Activated B cell treated with CpG ODN at 0.5 μM for 24 hours (primary cell): ENCODE measurements at regions of chr17 and their contacts with region 1.

Region 1: GRCh38 chr17:3845621-3846441 is at the start of gene NCBP3:
- DNase-seq: peak; percentile 92
- ATAC-seq: peak; percentile 96
- H3K4me3 Mint-ChIP-seq: peak within 1 kb of the TSS; percentile 92
- H3K27ac Mint-ChIP-seq: peak within 1 kb of the TSS; percentile 83
- H3K4me1 Mint-ChIP-seq: peaks cover 21% of the 10 kb centered on the region
- H3K27me3 Mint-ChIP-seq: peaks cover 2% of the 10 kb centered on the region
- CTCF ChIP-seq: no peak
- total RNA-seq, gene NCBP3: 49.5 TPM in 2 replicates

Region 2: GRCh38 chr17:2380226-2380922 is 1465.5 kb before region 1 on chr17:
- CTCF ChIA-PET with region 1: no interaction called
- POLR2A ChIA-PET with region 1: no interaction called
- intact Hi-C with region 1: no loop called
- DNase-seq: no peak
- ATAC-seq: no peak
- H3K4me3 Mint-ChIP-seq: no peak overlapping the region
- H3K27ac Mint-ChIP-seq: no peak overlapping the region
- H3K4me1 Mint-ChIP-seq: no peaks in the 10 kb centered on the region
- H3K27me3 Mint-ChIP-seq: no peaks in the 10 kb centered on the region
- CTCF ChIP-seq: no peak

Region 3: DNA sequence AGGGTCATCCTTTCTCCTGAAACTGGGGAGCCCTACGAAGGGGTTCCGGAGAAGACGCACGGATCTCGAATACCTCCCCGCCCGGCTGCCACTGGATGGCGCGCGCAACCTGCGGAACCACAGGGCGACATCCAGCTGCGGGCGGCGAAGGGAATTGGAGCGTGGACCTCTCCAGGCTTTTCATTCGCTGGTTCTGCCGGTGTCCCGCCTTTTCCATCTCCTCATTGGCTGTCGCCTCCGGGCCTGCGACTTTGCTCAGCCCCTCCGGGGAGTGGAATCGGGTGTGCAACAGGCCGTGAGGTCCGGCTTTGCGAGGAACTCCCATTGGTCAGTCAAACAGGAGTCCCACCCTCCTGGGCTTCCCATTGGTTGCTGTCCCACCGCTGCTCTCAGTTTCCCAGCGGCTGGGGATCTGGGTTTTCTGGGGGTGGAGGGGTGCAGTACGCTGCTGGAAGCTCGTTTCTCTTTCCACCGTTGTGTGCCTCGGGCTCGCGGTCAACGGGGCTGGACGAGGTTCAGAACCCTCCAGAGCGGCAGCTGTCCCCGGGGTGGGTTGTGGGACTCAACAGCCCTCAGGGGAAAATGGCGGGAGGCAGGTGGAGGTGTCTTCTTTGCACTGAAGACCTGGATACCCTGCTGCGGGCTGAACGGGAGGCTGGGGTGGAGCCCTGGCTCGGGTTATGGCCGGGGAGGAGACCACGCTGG is 796.9 kb before region 1 on chr17:
- CTCF ChIA-PET with region 1: no interaction called
- POLR2A ChIA-PET with region 1: interaction called, 3 read pairs
- intact Hi-C with region 1: loop called (anchors 5 kb)
- DNase-seq: peak; percentile 80
- ATAC-seq: peak; percentile 98
- H3K4me3 Mint-ChIP-seq: peak overlapping the region; percentile 92
- H3K27ac Mint-ChIP-seq: peak overlapping the region; percentile 83
- H3K4me1 Mint-ChIP-seq: peaks cover 8% of the 10 kb centered on the region
- H3K27me3 Mint-ChIP-seq: no peaks in the 10 kb centered on the region
- CTCF ChIP-seq: no peak

Region 4: GRCh38 chr17:3704931-3705717 is 140.7 kb before region 1 on chr17:
- CTCF ChIA-PET with region 1: no interaction called
- POLR2A ChIA-PET with region 1: no interaction called
- intact Hi-C with region 1: no loop called
- DNase-seq: no peak
- ATAC-seq: no peak
- H3K4me3 Mint-ChIP-seq: no peak overlapping the region
- H3K27ac Mint-ChIP-seq: peak overlapping the region; percentile 16
- H3K4me1 Mint-ChIP-seq: peaks cover 73% of the 10 kb centered on the region
- H3K27me3 Mint-ChIP-seq: no peaks in the 10 kb centered on the region
- CTCF ChIP-seq: no peak

Region 5: GRCh38 chr17:3827124-3827773 is 18.6 kb before region 1 on chr17:
- CTCF ChIA-PET with region 1: interaction called, 13 read pairs
- POLR2A ChIA-PET with region 1: no interaction called
- intact Hi-C with region 1: no loop called
- DNase-seq: no peak
- ATAC-seq: peak; percentile 68
- H3K4me3 Mint-ChIP-seq: no peak overlapping the region
- H3K27ac Mint-ChIP-seq: no peak overlapping the region
- H3K4me1 Mint-ChIP-seq: peaks cover 1% of the 10 kb centered on the region
- H3K27me3 Mint-ChIP-seq: no peaks in the 10 kb centered on the region
- CTCF ChIP-seq: no peak

Region 6: DNA sequence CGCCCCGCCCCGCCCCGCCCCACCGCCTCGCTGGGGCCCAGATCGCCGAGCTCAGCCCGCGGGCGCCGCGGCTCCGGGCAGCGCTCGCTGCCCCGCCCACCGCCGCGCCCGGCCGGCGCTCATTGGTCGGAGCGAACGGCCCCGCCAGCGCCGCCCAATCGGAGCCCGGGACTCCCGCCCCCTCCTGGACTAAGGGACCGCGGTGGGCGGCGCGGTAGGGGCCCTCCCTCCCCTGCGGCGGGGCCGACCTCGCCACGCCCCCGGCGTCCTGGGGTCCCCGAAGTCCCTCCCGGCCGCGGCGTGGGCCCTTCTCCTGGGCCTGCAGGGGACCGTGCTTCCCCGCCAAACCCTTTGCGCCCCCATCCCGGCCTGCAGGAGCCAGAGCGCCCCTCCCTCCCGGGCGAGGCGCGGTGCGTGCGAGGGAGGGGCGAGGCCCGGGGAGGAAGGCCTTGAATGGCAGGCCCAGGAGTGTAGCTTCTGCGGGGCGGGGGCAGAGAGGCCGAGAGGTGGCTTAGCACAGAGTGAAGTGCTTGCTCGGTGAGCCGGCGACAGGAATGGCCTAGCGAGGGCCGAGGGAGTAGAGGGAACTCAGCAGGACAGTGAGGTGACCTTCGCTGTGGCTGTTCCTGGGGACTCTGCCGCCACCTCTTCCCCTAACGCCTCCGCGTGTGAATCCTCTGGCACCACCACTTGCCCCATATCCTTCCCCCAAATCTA is 47.3 kb after region 1 on chr17 and contains the start of gene CAMKK1:
- CTCF ChIA-PET with region 1: interaction called, 7 read pairs
- POLR2A ChIA-PET with region 1: interaction called, 6 read pairs
- intact Hi-C with region 1: loop called (anchors 1 kb)
- DNase-seq: peak; percentile 93
- ATAC-seq: peak; percentile 88
- H3K4me3 Mint-ChIP-seq: peak within 1 kb of the TSS; percentile 81
- H3K27ac Mint-ChIP-seq: peak within 1 kb of the TSS; percentile 77
- H3K4me1 Mint-ChIP-seq: peaks cover 38% of the 10 kb centered on the region
- H3K27me3 Mint-ChIP-seq: no peaks in the 10 kb centered on the region
- CTCF ChIP-seq: no peak
- total RNA-seq, gene CAMKK1: 4.3 and 6.1 TPM in 2 replicates

Region 7: GRCh38 chr17:3965118-3965803 is 119.4 kb after region 1 on chr17:
- CTCF ChIA-PET with region 1: interaction called, 9 read pairs
- POLR2A ChIA-PET with region 1: interaction called, 15 read pairs
- intact Hi-C with region 1: loop called (anchors 5 kb)
- DNase-seq: peak; percentile 64
- ATAC-seq: peak; percentile 49
- H3K4me3 Mint-ChIP-seq: peak overlapping the region; percentile 87
- H3K27ac Mint-ChIP-seq: peak overlapping the region; percentile 94
- H3K4me1 Mint-ChIP-seq: peaks cover 77% of the 10 kb centered on the region
- H3K27me3 Mint-ChIP-seq: no peaks in the 10 kb centered on the region
- CTCF ChIP-seq: no peak

Region 8: GRCh38 chr17:4074831-4075495 is 229.1 kb after region 1 on chr17:
- CTCF ChIA-PET with region 1: interaction called, 16 read pairs
- POLR2A ChIA-PET with region 1: interaction called, 3 read pairs
- intact Hi-C with region 1: loop called (anchors 1 kb)
- DNase-seq: no peak
- ATAC-seq: peak; percentile 53
- H3K4me3 Mint-ChIP-seq: peak overlapping the region; percentile 76
- H3K27ac Mint-ChIP-seq: peak overlapping the region; percentile 84
- H3K4me1 Mint-ChIP-seq: peaks cover 18% of the 10 kb centered on the region
- H3K27me3 Mint-ChIP-seq: no peaks in the 10 kb centered on the region
- CTCF ChIP-seq: no peak